Psoas muscle (tissue), 8 donors: ENCODE measurements at regions of chr10 and their contacts with region 1.

Region 1: GRCh38 chr10:100046021-100046486 is 35.6 kb downstream of the CPN1 start:
- DNase-seq: peak; percentile 85 to 93
- ATAC-seq: peak; percentile 79 to 92 (median 87)
- H3K4me3 ChIP-seq: no peak overlapping the region
- H3K27ac ChIP-seq: no peak overlapping the region
- H3K4me1 ChIP-seq: peaks cover 10% of the 10 kb centered on the region
- H3K27me3 ChIP-seq: no peaks in the 10 kb centered on the region
- CTCF ChIP-seq: peak; percentile 96

Region 2: GRCh38 chr10:99845837-99846382 is 200.1 kb before region 1 on chr10:
- intact Hi-C with region 1: loop called (anchors 1 to 2 kb)
- DNase-seq: peak; percentile 58 to 70
- ATAC-seq: peak; percentile 91 to 98 (median 94)
- H3K4me3 ChIP-seq: peak overlapping the region; percentile 36
- H3K27ac ChIP-seq: no peak overlapping the region
- H3K4me1 ChIP-seq: peaks cover 10% of the 10 kb centered on the region
- H3K27me3 ChIP-seq: no peaks in the 10 kb centered on the region
- CTCF ChIP-seq: peak; percentile 96

Region 3: GRCh38 chr10:99906470-99906869 is 139.6 kb before region 1 on chr10:
- intact Hi-C with region 1: loop called (anchors 5 to 10 kb)
- DNase-seq: peak; percentile 66 to 81
- ATAC-seq: peak; percentile 97 to 98 (median 98)
- H3K4me3 ChIP-seq: no peak overlapping the region
- H3K27ac ChIP-seq: peak overlapping the region; percentile 61
- H3K4me1 ChIP-seq: peaks cover 8% of the 10 kb centered on the region
- H3K27me3 ChIP-seq: no peaks in the 10 kb centered on the region
- CTCF ChIP-seq: no peak